ENCODE measurements at regions of chr1 and their contacts with region 1.

Region 1: GRCh38 chr1:228457396-228458176 is 29.6 kb upstream of the RNF187 start:
- DNase-seq: peak; percentile 70 to 91 (median 82)
- H3K4me3 ChIP-seq: peak overlapping the region; percentile 42
- H3K27ac ChIP-seq: peak overlapping the region; percentile 69 to 72
- H3K4me1 ChIP-seq: peaks cover 3% of the 10 kb centered on the region
- H3K27me3 ChIP-seq: no peaks in the 10 kb centered on the region
- CTCF ChIP-seq: peak in 2 of 3 donors; percentile 53
- EP300 ChIP-seq: no peak
- POLR2A ChIP-seq: peak; percentile 28

Region 2: DNA sequence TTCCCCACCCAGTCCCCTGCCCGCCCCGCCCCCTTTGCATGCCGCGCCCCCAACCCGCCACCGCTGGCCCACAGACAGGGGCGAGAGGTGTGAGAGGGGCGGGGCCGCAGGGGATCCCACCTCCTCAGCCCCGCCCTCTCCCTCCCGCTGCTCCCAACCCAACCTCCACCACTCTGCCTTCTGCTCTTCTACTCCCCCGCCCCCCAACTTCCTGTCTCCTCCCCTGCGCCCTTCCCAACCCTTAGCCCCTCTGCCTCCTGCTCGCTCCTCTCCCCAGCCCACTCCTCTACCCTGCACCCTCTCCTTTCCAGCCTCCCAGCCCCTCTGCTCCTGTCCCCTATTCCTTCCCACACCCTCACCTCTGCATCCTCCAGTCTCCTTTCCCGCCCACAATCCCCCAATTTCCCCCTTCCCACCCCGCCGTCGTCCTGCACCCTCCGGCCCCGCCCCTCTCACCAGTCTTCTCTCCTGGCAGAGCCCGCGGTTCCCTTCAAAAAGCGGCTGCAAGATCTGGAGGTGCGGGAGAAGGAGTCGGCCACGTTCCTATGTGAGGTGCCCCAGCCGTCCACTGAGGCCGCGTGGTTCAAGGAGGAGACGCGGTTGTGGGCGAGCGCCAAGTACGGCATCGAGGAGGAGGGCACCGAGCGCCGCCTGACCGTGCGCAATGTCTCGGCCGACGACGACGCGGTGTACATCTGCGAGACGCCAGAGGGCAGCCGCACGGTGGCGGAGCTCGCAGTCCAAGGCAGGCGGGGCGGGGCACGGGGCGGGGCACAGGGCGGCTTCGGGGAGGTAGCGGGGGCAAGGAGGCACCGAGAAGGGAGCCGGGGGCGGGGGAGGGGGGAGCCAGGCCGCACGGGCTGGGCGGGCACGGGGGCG is 244.4 kb before region 1 on chr1:
- intact Hi-C with region 1: loop called in 1 of 4 experiments (anchors 10 kb)
- DNase-seq: peak; percentile 77 to 85 (median 80)
- H3K4me3 ChIP-seq: peak overlapping the region; percentile 45
- H3K27ac ChIP-seq: no peak overlapping the region
- H3K4me1 ChIP-seq: peaks cover 3% of the 10 kb centered on the region
- H3K27me3 ChIP-seq: no peaks in the 10 kb centered on the region
- CTCF ChIP-seq: peak; percentile 31 to 61 (median 56)
- EP300 ChIP-seq: no peak
- POLR2A ChIP-seq: no peak

Region 3: DNA sequence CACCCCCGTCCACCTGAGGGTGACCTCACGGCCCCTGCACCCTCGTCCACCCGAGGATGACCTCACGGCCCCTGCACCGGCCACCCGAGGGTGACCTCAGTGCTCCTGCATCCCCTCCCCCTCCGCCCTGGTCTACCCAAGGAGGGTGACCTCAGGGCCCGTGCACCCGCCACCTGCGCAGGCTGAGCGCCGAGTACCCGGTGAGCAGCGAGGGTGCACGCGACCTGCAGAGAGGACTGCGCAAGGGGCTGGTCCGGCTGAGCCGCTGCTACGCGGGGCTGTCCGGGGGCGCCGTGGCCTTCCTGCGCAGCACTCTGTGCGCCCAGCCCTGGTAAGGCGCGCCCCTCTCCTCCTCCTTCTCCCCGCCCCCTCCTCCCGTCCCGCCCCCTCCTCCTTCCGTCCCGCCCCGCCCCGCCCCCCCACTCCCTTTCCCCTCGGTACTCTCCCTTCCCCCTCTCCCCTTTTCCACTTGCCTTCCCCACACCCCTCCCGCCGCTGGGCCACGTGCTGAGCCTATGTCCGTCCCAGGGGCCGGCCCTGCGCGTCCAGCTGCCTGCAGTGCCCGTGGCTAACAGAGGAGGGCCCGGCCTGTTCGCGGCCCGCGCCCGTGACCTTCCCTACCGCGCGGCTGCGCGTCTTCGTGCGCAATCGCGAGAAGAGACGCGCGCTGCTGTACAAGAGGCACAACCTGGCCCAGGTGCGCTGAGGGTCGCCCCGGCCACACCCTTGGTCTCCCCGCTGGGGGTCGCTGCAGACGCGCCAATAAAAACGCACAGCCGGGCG is 79.3 kb before region 1 on chr1:
- intact Hi-C with region 1: loop called in 1 of 4 experiments (anchors 10 kb)
- DNase-seq: peak; percentile 79 to 90 (median 84)
- H3K4me3 ChIP-seq: peak overlapping the region; percentile 26
- H3K27ac ChIP-seq: peak overlapping the region; percentile 54 to 62
- H3K4me1 ChIP-seq: peaks cover 14% of the 10 kb centered on the region
- H3K27me3 ChIP-seq: no peaks in the 10 kb centered on the region
- CTCF ChIP-seq: peak; percentile 35 to 91 (median 77)
- EP300 ChIP-seq: no peak
- POLR2A ChIP-seq: no peak

Measured in ovary (tissue), 10 donors.